Activated B cell treated with CpG ODN at 0.5 μM for 24 hours (primary cell): ENCODE measurements at regions of chr1 and their contacts with region 1.

Region 1: DNA sequence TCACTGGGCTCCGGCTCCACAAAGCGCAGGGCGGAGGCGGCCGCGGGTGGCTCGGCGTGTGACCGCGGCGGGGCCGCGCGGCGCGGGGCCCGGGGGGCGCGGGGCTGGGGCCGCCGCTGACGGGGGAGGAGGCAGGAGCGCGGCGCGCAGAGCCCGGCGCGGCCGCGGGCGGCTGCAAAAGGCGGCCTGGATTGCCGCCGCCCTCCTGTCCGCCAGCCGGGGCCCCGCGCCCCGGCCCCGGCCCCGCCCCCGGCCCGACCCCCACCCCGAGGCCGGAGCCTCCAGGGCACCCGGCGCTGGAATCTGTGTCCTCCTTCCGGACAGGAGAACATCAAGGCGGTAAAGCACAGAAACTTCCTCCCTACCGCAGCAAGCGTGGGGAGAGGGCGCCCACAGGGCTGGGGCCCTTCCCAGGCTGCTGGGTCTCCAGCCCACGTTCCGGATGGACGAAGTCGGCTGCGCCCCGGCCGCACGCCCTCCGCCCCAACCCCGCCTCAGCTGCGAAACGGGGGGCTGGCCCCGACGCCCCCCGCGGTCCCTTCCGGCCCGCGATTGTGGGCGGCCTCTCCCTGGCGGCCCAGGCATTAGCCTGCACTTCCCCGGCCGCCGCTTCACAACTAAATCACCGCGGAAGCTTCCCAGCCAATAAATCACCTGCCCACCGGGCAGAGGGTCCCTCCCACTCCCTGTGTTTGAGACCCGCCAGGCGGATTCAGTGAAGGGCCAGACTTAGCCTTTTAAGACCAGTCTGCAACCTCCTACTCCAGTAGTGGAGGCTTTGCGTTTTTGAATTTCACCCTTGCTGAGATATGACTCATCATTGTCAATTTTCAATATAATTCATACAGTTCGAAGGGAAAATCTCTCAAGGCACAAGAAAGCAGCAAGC is 106.0 kb downstream of the SLC45A1 start:
- DNase-seq: peak; percentile 59
- ATAC-seq: peak; percentile 30
- H3K4me3 Mint-ChIP-seq: peak overlapping the region; percentile 90
- H3K27ac Mint-ChIP-seq: peak overlapping the region; percentile 96
- H3K4me1 Mint-ChIP-seq: peaks cover 48% of the 10 kb centered on the region
- H3K27me3 Mint-ChIP-seq: no peaks in the 10 kb centered on the region
- CTCF ChIP-seq: no peak

Region 2: GRCh38 chr1:8026153-8026975 is 397.5 kb before region 1 on chr1 and contains the start of gene ERRFI1:
- CTCF ChIA-PET with region 1: no interaction called
- POLR2A ChIA-PET with region 1: no interaction called
- intact Hi-C with region 1: loop called (anchors 1 kb)
- DNase-seq: peak; percentile 92
- ATAC-seq: peak; percentile 91
- H3K4me3 Mint-ChIP-seq: peak within 1 kb of the TSS; percentile 86
- H3K27ac Mint-ChIP-seq: peak within 1 kb of the TSS; percentile 21
- H3K4me1 Mint-ChIP-seq: peaks cover 12% of the 10 kb centered on the region
- H3K27me3 Mint-ChIP-seq: peaks cover 18% of the 10 kb centered on the region
- CTCF ChIP-seq: no peak
- total RNA-seq, gene ERRFI1: 1.3 and 1.4 TPM in 2 replicates

Region 3: GRCh38 chr1:8409106-8409505 is 14.8 kb before region 1 on chr1:
- CTCF ChIA-PET with region 1: interaction called, 15 read pairs
- POLR2A ChIA-PET with region 1: interaction called, 12 read pairs
- intact Hi-C with region 1: loop called (anchors 2 kb)
- DNase-seq: no peak
- ATAC-seq: peak; percentile 78
- H3K4me3 Mint-ChIP-seq: peak overlapping the region; percentile 0
- H3K27ac Mint-ChIP-seq: peak overlapping the region; percentile 54
- H3K4me1 Mint-ChIP-seq: peaks cover 44% of the 10 kb centered on the region
- H3K27me3 Mint-ChIP-seq: no peaks in the 10 kb centered on the region
- CTCF ChIP-seq: no peak

Region 4: DNA sequence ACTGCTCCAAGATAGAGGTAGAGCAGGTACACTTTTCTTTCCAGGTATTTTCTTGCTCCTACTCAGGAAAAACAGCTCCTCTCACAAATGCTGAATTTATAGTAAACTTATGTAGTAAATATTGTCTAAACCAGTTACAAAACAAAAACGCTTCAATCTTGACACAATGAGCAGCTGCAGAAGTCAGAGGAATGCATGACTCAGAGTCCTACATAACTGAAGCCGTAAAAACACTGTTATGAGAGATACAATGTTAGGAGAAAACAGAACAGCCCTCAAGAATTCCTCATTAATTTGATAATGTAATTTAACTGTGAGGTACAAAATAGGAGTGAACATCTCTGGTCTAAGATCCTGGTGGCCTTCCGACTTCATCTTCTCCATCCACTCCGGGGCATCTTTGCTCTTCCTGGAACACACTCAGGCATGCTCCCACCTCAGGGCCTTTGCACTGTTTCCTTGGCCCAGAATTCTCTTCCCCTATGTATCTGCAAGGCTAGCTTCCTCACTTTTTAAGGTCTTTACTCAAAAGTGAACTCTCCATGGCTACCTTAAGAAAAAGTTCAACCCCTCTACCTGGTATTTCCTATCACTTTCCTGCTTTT is 32.5 kb after region 1 on chr1:
- CTCF ChIA-PET with region 1: no interaction called
- POLR2A ChIA-PET with region 1: interaction called, 5 read pairs
- intact Hi-C with region 1: loop called (anchors 5 kb)
- DNase-seq: no peak
- ATAC-seq: no peak
- H3K4me3 Mint-ChIP-seq: no peak overlapping the region
- H3K27ac Mint-ChIP-seq: no peak overlapping the region
- H3K4me1 Mint-ChIP-seq: peaks cover 38% of the 10 kb centered on the region
- H3K27me3 Mint-ChIP-seq: no peaks in the 10 kb centered on the region
- CTCF ChIP-seq: no peak

Region 5: GRCh38 chr1:8525558-8526275 is 101.8 kb after region 1 on chr1:
- CTCF ChIA-PET with region 1: interaction called, 3 read pairs
- POLR2A ChIA-PET with region 1: interaction called, 17 read pairs
- intact Hi-C with region 1: no loop called
- DNase-seq: peak; percentile 35
- ATAC-seq: peak; percentile 94
- H3K4me3 Mint-ChIP-seq: no peak overlapping the region
- H3K27ac Mint-ChIP-seq: no peak overlapping the region
- H3K4me1 Mint-ChIP-seq: peaks cover 27% of the 10 kb centered on the region
- H3K27me3 Mint-ChIP-seq: no peaks in the 10 kb centered on the region
- CTCF ChIP-seq: no peak

Region 6: DNA sequence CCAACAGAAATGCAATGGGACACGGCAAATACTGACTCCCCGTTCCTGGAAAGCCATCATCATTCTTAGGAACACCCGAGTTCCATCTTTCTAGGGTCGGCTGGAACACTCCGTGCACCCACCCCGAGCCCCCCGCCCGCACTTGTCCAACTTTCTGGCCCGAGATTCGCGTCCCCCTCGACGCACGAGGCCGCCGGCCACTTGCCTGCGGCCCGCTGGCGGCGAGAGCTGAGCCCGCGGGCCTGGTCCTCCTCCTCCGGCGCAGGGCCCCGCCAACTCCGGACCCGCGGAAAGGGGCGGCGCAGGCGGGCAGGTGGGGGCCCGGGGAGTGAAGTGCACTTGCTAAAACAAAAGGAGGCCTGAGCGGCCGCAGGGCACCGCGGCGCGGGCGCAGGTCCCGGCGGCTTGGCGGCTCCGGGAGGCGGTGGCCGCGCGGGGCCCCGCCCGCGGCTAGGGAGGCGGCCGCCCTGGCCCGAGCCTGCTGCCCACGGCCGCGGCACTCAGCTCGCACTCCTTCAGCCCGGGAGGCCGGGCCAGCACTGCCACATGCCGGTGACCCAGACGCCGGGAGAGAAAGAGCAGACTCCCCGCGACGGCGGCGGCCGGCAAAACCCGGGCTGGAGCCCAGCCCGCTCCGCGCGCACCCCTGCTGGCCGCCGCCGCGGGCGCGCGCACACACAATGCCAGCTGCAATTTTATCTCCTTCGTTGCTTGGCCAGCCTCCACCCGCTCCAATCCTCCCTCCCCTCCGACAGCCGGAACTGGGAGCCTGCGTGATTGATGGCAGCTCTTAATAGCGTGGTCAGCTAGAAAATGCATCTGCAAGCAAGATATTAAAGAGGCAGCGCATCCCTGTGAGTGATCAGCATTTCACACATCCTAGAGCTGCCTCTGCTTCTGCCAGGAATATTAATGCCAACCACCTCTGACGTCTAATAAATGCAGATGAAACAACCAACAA is 279.2 kb after region 1 on chr1:
- CTCF ChIA-PET with region 1: no interaction called
- POLR2A ChIA-PET with region 1: interaction called, 10 read pairs
- intact Hi-C with region 1: loop called (anchors 1 kb)
- DNase-seq: peak; percentile 78
- ATAC-seq: peak; percentile 79
- H3K4me3 Mint-ChIP-seq: peak overlapping the region; percentile 89
- H3K27ac Mint-ChIP-seq: peak overlapping the region; percentile 83
- H3K4me1 Mint-ChIP-seq: peaks cover 56% of the 10 kb centered on the region
- H3K27me3 Mint-ChIP-seq: no peaks in the 10 kb centered on the region
- CTCF ChIP-seq: no peak